ENCODE measurements at regions of chr14 and their contacts with region 1.

Region 1: DNA sequence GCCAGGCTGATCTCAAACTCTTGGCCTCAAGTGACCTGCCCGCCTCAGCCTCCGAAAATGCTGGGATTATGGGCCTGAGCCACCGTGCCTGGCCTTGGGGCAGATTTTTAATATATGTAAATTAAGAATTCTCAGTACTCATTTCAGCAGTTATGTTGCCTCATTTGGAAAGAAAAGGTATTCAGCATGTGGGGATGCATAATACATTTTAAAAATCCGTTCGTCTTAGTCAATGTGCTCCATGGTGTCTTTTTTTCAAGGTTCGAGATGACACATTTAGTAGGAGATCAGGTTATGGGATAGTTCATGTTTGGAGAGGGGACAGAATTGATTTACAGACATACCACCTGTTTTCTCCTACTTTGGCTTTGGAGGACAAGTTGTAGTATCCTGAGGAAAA is 10.2 kb downstream of the SYNE2 start:
- DNase-seq: no peak
- H3K4me3 ChIP-seq: no peak overlapping the region
- H3K4me3 Mint-ChIP-seq: peak overlapping the region in 6 of 8 donors; percentile 46 to 82 (median 68)
- H3K27ac ChIP-seq: peak overlapping the region; percentile 85
- H3K27ac Mint-ChIP-seq: peak overlapping the region; percentile 93 to 100 (median 98)
- H3K4me1 ChIP-seq: peaks cover 92% of the 10 kb centered on the region
- H3K4me1 Mint-ChIP-seq: peaks cover 34 to 83% (median 62%) of the 10 kb centered on the region in 4 donors
- H3K27me3 ChIP-seq: no peaks in the 10 kb centered on the region
- H3K27me3 Mint-ChIP-seq: no peaks in the 10 kb centered on the region

Region 2: GRCh38 chr14:63875311-63875710 is 12.3 kb after region 1 on chr14:
- CTCF ChIA-PET with region 1: interaction called, 4 read pairs
- POLR2A ChIA-PET with region 1: interaction called, 97 read pairs
- intact Hi-C with region 1: no loop called
- DNase-seq: no peak
- H3K4me3 ChIP-seq: no peak overlapping the region
- H3K4me3 Mint-ChIP-seq: no peak overlapping the region
- H3K27ac ChIP-seq: no peak overlapping the region
- H3K27ac Mint-ChIP-seq: peak overlapping the region in 5 of 7 donors; percentile 21 to 75 (median 48)
- H3K4me1 ChIP-seq: peaks cover 37% of the 10 kb centered on the region
- H3K4me1 Mint-ChIP-seq: peaks cover 39 to 75% (median 55%) of the 10 kb centered on the region in 4 donors
- H3K27me3 ChIP-seq: no peaks in the 10 kb centered on the region
- H3K27me3 Mint-ChIP-seq: no peaks in the 10 kb centered on the region

Region 3: GRCh38 chr14:64049616-64050381 is 186.8 kb after region 1 on chr14:
- CTCF ChIA-PET with region 1: no interaction called
- POLR2A ChIA-PET with region 1: no interaction called
- intact Hi-C with region 1: no loop called
- DNase-seq: no peak
- H3K4me3 ChIP-seq: no peak overlapping the region
- H3K4me3 Mint-ChIP-seq: no peak overlapping the region
- H3K27ac ChIP-seq: no peak overlapping the region
- H3K27ac Mint-ChIP-seq: peak overlapping the region in 1 of 7 donors; percentile 2
- H3K4me1 ChIP-seq: no peaks in the 10 kb centered on the region
- H3K4me1 Mint-ChIP-seq: peaks cover 0 to 3% (median 1%) of the 10 kb centered on the region in 4 donors
- H3K27me3 ChIP-seq: no peaks in the 10 kb centered on the region
- H3K27me3 Mint-ChIP-seq: no peaks in the 10 kb centered on the region